Dorsolateral prefrontal cortex (tissue), 120 donors: ENCODE measurements at regions of chr20 and their contacts with region 1.

Region 1: DNA sequence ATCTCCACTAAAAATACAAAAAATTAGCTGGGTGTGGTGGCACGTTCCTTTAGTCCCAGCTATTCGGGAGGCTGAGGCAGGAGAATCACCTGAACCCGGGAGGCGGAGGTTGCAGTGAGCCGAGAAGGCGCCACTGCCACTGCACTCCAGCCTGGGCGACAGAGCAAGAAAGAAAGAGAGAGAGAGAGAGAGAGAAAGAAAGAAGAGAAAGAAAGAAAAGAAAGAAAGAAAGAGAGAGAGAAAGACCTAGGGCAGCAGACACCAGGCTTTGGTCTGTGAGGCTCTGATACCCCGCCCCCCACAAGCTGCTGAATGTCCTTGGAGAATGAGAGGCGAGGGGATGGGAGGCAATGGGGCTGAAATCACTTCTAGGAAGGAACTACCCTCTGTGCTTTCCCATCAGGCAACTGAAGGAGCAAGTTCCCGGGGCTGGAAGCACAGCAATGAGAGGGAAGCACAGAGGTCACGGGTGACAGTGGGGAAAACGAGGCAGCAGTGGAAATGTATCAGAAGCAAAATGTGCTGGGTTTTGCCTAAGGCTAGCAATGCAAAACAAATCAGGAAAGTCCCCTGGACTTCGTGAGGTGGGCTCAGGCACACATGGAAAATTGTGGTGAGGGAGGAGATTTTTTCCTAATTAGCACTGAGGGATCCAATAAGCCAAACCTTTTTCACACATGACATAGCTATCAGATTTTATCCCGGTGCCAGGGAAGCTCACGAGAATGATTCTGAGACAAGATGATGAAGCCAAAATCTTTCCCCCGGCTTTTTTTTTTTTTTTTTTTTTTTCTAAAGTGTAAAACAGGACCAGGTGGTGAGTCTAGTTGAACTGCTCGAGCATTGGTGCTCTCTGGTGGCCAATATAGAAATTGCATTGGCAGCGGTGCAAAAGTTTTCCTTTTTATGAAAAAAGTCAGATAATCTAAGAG is 16.9 kb upstream of the ARFGEF2 start:
- DNase-seq: peak in 7 of 10 donors; percentile 23 to 71 (median 50)
- H3K4me3 ChIP-seq: peak overlapping the region in 12 of 59 donors; percentile 9 to 32 (median 22)
- H3K27ac ChIP-seq: peak overlapping the region in 19 of 59 donors; percentile 2 to 74 (median 41)
- H3K27me3 ChIP-seq: no peaks in the 10 kb centered on the region
- CTCF ChIP-seq: peak; percentile 84 to 99 (median 92)

Region 2: DNA sequence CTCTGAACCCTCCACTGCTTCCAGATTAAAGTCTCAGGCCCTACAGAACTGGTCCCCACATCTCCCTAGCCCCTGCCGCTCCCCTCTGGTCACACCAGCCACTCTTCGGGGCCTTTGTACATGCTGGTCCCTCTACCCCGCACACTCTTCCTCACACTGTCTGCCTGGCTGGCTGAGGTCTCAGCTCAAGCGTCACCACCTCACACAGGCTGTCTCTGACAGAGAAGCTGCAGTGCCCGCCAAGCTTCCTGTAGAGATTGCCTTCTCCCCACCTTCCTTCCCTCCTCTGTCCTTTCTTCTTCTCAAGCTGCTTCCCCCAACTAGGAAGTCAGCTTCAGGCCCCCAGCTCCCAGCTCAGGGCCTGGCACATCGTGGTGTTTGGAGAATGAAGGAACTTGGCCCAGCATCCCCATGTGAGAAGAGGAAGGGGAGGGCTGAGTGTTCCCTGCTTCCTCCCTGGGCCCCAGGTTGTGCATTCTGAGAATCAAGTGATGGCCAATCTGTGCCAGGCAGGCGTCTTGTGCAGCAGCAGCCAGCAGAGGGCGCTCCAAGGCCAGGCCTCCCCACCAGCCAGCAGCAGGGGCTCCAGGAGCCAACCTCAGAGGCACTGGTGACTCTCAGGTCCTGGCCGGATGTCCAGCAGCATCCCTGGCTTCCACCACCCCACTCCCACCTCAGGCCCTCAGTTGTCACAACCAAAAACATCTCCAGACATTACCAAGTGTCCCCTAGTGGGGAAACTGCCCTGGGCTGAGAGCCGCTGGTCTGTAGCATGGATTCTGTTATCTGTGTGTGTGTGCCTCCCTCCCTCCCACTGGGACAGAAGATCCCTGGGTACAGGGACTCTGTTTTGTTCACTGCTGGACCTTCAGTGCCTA is 269.0 kb before region 1 on chr20:
- intact Hi-C with region 1: loop called (anchors 2 to 5 kb)
- DNase-seq: peak; percentile 32 to 88 (median 76)
- H3K4me3 ChIP-seq: no peak overlapping the region
- H3K27ac ChIP-seq: peak overlapping the region in 58 of 59 donors; percentile 33 to 95 (median 81)
- H3K27me3 ChIP-seq: no peaks in the 10 kb centered on the region
- CTCF ChIP-seq: peak; percentile 65 to 96 (median 86)

Region 3: GRCh38 chr20:48722737-48723191 is 181.9 kb before region 1 on chr20:
- intact Hi-C with region 1: loop called in 1 of 2 experiments (anchors 10 kb)
- DNase-seq: no peak
- H3K4me3 ChIP-seq: peak overlapping the region in 2 of 59 donors; percentile 2 to 5
- H3K27ac ChIP-seq: peak overlapping the region; percentile 80 to 100 (median 98)
- H3K27me3 ChIP-seq: no peaks in the 10 kb centered on the region
- CTCF ChIP-seq: no peak

Region 4: DNA sequence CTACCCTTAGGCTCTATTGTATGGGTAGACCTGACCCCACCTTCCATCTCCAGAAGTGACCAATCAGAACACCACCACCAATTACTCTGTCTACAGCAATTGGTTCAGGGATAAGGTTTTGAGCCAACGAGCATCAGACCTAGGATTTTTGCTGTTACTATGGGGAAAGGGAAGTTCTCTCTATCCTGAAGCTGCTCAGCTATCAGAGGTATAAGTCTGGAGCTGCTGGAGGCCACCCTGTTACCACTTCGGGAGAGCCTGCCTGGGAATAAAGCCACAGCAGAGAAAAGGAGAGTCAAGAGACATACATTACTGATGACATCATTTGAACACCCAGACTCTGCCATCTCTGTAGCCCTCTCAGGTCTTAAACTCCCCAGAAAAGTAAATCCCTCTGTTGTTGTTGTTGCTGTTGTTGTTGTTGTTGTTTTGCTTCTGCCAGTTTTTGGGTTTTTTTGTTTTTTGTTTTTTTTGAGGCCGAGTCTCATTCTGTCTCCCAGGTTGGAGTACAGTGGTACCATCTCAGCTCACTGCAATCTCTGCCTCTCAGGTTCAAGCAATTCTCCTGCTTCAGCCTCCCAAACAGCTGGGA is 171.2 kb before region 1 on chr20:
- intact Hi-C with region 1: loop called (anchors 5 to 10 kb)
- DNase-seq: no peak
- H3K4me3 ChIP-seq: no peak overlapping the region
- H3K27ac ChIP-seq: peak overlapping the region in 53 of 59 donors; percentile 39 to 100 (median 98)
- H3K27me3 ChIP-seq: no peaks in the 10 kb centered on the region
- CTCF ChIP-seq: no peak

Region 5: DNA sequence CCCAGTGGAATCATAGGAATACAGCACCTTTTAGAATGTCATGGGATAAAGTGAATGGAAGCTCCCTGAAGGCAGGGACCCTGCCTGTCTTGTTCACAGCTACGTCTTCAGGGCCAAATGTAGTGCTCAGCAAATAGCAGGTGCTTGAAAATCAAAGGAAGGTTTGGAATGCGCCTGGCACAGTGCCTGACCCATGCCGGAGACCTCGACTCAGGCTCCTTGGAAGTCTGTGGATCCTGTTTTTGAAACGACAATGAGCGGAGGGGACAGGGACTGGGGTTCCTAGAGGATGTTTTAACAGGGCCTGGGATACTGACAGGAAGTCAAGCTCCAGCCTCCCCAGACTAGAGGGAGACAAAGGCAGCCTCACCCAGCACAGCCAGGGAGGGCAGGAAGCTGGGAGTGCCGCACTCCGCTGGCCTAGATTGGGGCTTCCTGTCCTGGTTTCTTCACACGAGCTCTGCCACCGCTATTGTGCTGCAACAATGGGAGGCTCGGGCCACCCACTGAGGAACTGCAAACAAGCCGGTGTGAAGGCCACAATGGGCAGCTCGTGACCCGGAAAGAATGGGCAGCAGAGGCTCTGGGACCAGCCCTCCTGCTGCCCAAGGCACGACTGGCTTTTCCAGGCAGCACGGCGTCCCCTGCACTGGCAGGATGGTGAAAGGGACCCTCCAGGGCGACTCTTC is 153.5 kb before region 1 on chr20:
- intact Hi-C with region 1: loop called in 1 of 2 experiments (anchors 5 kb)
- DNase-seq: peak in 9 of 10 donors; percentile 61 to 80 (median 77)
- H3K4me3 ChIP-seq: peak overlapping the region in 7 of 59 donors; percentile 2 to 21 (median 12)
- H3K27ac ChIP-seq: peak overlapping the region; percentile 53 to 100 (median 94)
- H3K27me3 ChIP-seq: no peaks in the 10 kb centered on the region
- CTCF ChIP-seq: peak in 14 of 56 donors; percentile 5 to 37 (median 13)

Region 6: DNA sequence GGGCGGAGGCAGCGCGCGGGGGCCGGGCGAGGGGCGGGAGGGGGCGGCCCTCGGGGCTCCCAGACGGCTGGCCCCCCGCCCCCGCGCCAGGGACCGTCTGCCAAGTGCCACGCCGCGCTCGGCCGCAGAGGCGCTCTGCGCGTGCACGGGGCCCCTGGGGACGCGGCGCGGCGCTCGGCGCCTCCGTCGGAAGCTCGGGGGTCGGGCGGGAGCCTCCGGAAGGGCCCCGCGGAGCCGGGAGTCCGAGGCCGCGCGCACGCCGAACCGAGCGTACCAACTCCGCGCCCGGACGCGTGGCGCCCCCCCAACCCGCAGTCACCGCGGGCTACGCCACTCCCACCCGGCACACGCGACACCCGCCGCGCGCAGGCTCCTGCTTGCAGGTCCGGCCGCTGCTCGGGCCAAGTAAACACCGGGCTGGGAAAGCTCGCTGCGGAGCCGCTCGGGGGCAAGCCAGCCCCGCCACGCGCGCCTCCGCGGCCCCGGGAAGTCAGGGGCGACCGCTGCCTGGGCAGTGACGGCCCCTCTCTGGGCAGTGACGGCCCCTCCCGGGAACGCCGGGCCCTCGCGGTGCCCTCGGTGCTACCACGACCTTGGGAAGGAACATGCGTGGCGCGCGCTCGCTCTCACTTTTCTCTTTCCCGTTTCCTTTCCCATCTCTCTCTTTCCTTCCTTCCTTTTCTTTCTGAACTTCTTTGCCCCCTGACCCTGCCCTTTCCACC is 76.4 kb before region 1 on chr20:
- intact Hi-C with region 1: loop called (anchors 2 to 5 kb)
- DNase-seq: peak; percentile 26 to 88 (median 72)
- H3K4me3 ChIP-seq: peak overlapping the region; percentile 48 to 94 (median 69)
- H3K27ac ChIP-seq: peak overlapping the region; percentile 9 to 98 (median 92)
- H3K27me3 ChIP-seq: no peaks in the 10 kb centered on the region
- CTCF ChIP-seq: peak in 42 of 56 donors; percentile 8 to 65 (median 32)